CD4-positive, alpha-beta memory T cell (primary cell): ENCODE measurements at regions of chr2 and their contacts with region 1.

Region 1: DNA sequence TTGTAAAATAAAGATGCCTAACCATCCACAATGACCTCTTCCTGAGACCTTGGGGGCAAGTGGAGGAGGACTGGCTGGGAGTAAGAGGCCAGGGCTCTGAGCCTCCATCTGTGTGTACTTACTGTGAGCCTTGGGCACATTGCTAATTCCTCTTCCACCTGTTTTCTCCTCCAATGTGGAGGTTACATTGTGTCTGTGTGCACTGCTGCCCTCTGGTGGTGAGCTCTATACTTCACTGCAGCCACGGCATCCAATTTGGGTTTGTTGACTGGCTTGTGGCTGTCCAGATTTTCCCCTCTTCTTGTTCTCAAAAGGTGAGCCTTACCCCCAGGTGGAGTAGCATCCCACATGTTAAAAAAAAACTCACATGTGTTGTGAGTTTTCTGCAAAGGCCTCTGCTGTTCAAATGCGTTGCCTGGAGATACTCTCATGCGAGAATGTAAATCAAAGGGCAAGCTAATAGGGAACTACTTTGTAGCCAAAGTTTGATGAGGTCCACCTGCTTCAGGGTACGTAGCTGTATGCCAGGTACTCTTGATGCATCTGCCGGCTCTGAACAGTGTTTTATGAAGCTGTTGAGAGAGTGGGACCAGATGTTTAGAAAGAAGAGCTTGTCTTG is 80.8 kb downstream of the APOB start:
- DNase-seq: peak; percentile 47 to 55 (median 53)
- H3K4me3 ChIP-seq: no peak overlapping the region
- H3K4me3 Mint-ChIP-seq: no peak overlapping the region
- H3K27ac ChIP-seq: no peak overlapping the region
- H3K27ac Mint-ChIP-seq: no peak overlapping the region
- H3K4me1 ChIP-seq: no peaks in the 10 kb centered on the region
- H3K4me1 Mint-ChIP-seq: no peaks in the 10 kb centered on the region
- H3K27me3 ChIP-seq: no peaks in the 10 kb centered on the region
- H3K27me3 Mint-ChIP-seq: peaks cover 9 to 29% of the 10 kb centered on the region in 2 donors

Region 2: GRCh38 chr2:20666304-20667150 is 296.5 kb before region 1 on chr2 and contains the start of gene GDF7:
- CTCF ChIA-PET with region 1: interaction called, 246 read pairs
- POLR2A ChIA-PET with region 1: interaction called, 5 read pairs
- intact Hi-C with region 1: loop called (anchors 1 kb)
- DNase-seq: peak in 1 of 5 donors; percentile 21
- H3K4me3 ChIP-seq: peak within 1 kb of the TSS in 1 of 2 donors; percentile 38
- H3K4me3 Mint-ChIP-seq: peak within 1 kb of the TSS; percentile 78 to 91 (median 86)
- H3K27ac ChIP-seq: no peak within 1 kb of the TSS
- H3K27ac Mint-ChIP-seq: peak within 1 kb of the TSS in 3 of 7 donors; percentile 40 to 87 (median 82)
- H3K4me1 ChIP-seq: peaks cover 24% of the 10 kb centered on the region
- H3K4me1 Mint-ChIP-seq: peaks cover 6 to 36% (median 18%) of the 10 kb centered on the region in 4 donors
- H3K27me3 ChIP-seq: peaks cover 43% of the 10 kb centered on the region
- H3K27me3 Mint-ChIP-seq: peaks cover 38 to 49% of the 10 kb centered on the region in 2 donors
- total RNA-seq, gene GDF7: 0.19 to 0.26 TPM

Region 3: GRCh38 chr2:20796374-20796791 is 166.7 kb before region 1 on chr2:
- CTCF ChIA-PET with region 1: interaction called, 17 read pairs
- POLR2A ChIA-PET with region 1: no interaction called
- intact Hi-C with region 1: no loop called
- DNase-seq: no peak
- H3K4me3 ChIP-seq: no peak overlapping the region
- H3K4me3 Mint-ChIP-seq: no peak overlapping the region
- H3K27ac ChIP-seq: no peak overlapping the region
- H3K27ac Mint-ChIP-seq: peak overlapping the region in 1 of 7 donors; percentile 51
- H3K4me1 ChIP-seq: no peaks in the 10 kb centered on the region
- H3K4me1 Mint-ChIP-seq: peaks cover 4 to 24% (median 17%) of the 10 kb centered on the region in 4 donors
- H3K27me3 ChIP-seq: no peaks in the 10 kb centered on the region
- H3K27me3 Mint-ChIP-seq: no peaks in the 10 kb centered on the region